ENCODE measurements at regions of chr7 and their contacts with region 1.

Region 1: DNA sequence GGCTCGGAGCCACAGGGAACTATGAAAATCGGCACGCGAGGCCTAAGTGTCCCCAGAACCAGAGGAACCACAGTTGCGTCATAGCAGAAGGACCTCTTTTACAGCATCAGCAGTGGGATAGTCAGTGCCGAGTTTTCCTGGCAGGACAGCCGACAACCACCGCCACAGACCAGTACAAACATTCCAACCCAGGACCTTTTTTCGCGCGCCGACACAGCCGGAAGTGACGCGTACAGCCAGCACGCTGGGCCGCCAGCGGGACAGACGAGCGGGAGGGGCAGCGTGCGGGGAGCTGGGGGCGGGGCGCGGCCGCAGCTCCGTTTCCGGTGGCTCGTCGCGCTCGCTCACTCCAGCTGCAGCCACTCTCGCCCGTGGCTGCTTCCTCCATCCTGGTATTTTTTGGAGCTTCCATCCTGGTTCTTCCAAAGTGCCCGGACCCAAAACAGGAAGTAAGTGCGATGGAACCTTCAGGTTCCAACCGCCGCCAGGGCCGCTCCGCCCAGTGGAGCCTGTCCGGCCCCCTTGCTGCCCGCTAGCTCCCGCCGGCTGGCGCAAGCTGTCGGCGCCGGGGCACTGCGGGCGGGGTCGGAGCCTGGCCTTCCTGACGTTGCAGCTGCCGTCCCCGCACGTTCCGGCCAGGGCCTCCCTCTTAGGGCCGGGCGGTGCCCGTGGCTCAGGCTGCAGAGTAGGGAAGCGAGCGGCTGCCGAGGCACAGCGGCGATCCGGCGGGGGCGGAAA is at the start of gene DMTF1:
- DNase-seq: peak; percentile 88
- H3K4me3 Mint-ChIP-seq: peak within 1 kb of the TSS; percentile 86
- H3K27ac Mint-ChIP-seq: peak within 1 kb of the TSS; percentile 95
- H3K4me1 Mint-ChIP-seq: peaks cover 45% of the 10 kb centered on the region
- H3K27me3 Mint-ChIP-seq: no peaks in the 10 kb centered on the region
- total RNA-seq, gene DMTF1: 102 to 111 TPM

Region 2: GRCh38 chr7:87202705-87203104 is 50.4 kb after region 1 on chr7:
- CTCF ChIA-PET with region 1: no interaction called
- POLR2A ChIA-PET with region 1: no interaction called
- DNase-seq: no peak
- H3K4me3 Mint-ChIP-seq: no peak overlapping the region
- H3K27ac Mint-ChIP-seq: no peak overlapping the region
- H3K4me1 Mint-ChIP-seq: peaks cover 35% of the 10 kb centered on the region
- H3K27me3 Mint-ChIP-seq: no peaks in the 10 kb centered on the region

Region 3: GRCh38 chr7:87219545-87220025 is 67.3 kb after region 1 on chr7 and contains the start of gene TMEM243:
- CTCF ChIA-PET with region 1: interaction called, 8 read pairs
- POLR2A ChIA-PET with region 1: interaction called, 12 read pairs
- DNase-seq: peak; percentile 88
- H3K4me3 Mint-ChIP-seq: peak within 1 kb of the TSS; percentile 99
- H3K27ac Mint-ChIP-seq: peak within 1 kb of the TSS; percentile 98
- H3K4me1 Mint-ChIP-seq: peaks cover 37% of the 10 kb centered on the region
- H3K27me3 Mint-ChIP-seq: peaks cover 7% of the 10 kb centered on the region
- total RNA-seq, gene TMEM243: 46.2 to 51.6 TPM